B cell (primary cell): ENCODE measurements at regions of chr2 and their contacts with region 1.

Region 1: DNA sequence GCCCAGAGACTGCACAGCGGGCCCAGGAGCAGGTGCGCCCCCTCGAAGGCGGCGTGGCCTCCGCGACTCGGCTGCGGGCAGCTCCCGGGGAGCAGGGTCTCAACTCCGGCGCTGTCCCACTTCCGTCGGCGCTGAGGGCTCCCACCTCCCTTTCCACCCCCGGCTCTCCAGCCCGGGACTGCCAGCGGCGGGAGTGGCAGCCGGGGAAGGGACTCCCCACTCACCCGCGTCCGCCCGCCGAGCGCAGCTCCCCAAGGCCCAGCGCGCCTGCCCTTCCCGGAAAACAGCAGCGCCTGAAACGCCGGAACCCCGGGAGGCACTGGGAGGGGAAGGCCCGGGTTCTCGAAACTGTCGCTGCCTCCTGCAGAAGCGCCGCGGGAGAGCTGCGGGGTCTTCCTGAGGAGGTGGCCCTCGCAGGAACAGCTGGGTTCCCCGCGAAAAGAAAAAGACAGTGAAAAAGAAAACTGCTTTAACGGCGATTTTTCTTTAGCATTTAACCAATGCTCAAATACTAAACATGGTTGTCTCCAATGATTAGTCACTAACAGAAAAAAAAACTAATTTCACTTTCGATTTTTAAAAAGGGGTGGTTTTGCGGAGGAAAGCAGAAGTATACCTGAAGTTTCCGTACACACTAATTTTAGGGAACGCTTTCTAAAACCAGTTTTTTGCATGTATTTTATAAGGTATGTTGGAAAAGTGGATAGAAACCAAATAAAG is at the start of gene NMI:
- DNase-seq: peak; percentile 85
- ATAC-seq: peak; percentile 76
- H3K4me3 ChIP-seq: peak within 1 kb of the TSS; percentile 75 to 97 (median 92)
- H3K4me3 Mint-ChIP-seq: peak within 1 kb of the TSS; percentile 94
- H3K27ac ChIP-seq: peak within 1 kb of the TSS; percentile 95 to 97
- H3K27ac Mint-ChIP-seq: peak within 1 kb of the TSS; percentile 97
- H3K4me1 ChIP-seq: peaks cover 27 to 31% of the 10 kb centered on the region in 2 donors
- H3K4me1 Mint-ChIP-seq: peaks cover 39% of the 10 kb centered on the region
- H3K27me3 ChIP-seq: no peaks in the 10 kb centered on the region
- H3K27me3 Mint-ChIP-seq: no peaks in the 10 kb centered on the region
- CTCF ChIP-seq: no peak
- total RNA-seq, gene NMI: 28.5 and 34.0 TPM in 2 replicates

Region 2: GRCh38 chr2:151189125-151189524 is 100.4 kb before region 1 on chr2:
- CTCF ChIA-PET with region 1: no interaction called
- POLR2A ChIA-PET with region 1: no interaction called
- intact Hi-C with region 1: no loop called
- DNase-seq: no peak
- ATAC-seq: no peak
- H3K4me3 ChIP-seq: no peak overlapping the region
- H3K4me3 Mint-ChIP-seq: no peak overlapping the region
- H3K27ac ChIP-seq: no peak overlapping the region
- H3K27ac Mint-ChIP-seq: no peak overlapping the region
- H3K4me1 ChIP-seq: no peaks in the 10 kb centered on the region
- H3K4me1 Mint-ChIP-seq: no peaks in the 10 kb centered on the region
- H3K27me3 ChIP-seq: no peaks in the 10 kb centered on the region
- H3K27me3 Mint-ChIP-seq: no peaks in the 10 kb centered on the region
- CTCF ChIP-seq: no peak

Region 3: DNA sequence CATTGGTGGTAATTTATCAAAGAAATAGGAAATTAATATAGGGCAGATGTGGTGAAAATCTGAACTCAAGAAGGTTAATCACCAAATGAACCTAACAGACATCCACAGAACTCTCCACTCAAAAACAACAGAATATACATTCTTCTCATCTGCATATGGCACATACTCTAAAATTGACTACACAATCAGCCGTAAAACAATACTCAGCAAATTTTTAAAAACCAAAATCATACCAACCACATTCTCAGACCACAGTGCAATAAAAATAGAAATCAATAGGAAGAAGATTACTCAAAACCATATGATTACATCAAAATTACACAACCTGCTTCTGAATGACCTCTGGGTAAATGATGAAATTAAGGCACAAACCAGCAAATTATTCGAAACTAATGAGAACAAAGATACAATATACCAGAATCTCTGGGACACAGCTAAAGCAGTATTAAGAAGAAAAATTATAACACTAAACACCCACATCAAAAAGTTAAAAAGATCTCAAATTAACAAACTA is 58.8 kb before region 1 on chr2:
- CTCF ChIA-PET with region 1: no interaction called
- POLR2A ChIA-PET with region 1: no interaction called
- intact Hi-C with region 1: no loop called
- DNase-seq: no peak
- ATAC-seq: no peak
- H3K4me3 ChIP-seq: no peak overlapping the region
- H3K4me3 Mint-ChIP-seq: no peak overlapping the region
- H3K27ac ChIP-seq: no peak overlapping the region
- H3K27ac Mint-ChIP-seq: no peak overlapping the region
- H3K4me1 ChIP-seq: no peaks in the 10 kb centered on the region
- H3K4me1 Mint-ChIP-seq: no peaks in the 10 kb centered on the region
- H3K27me3 ChIP-seq: peaks cover 0 to 5% (median 3%) of the 10 kb centered on the region in 4 experiments
- H3K27me3 Mint-ChIP-seq: peaks cover 27% of the 10 kb centered on the region
- CTCF ChIP-seq: no peak

Region 4: GRCh38 chr2:151261231-151261976 is 28.1 kb before region 1 on chr2 and contains the start of gene RBM43:
- CTCF ChIA-PET with region 1: interaction called, 11 read pairs
- POLR2A ChIA-PET with region 1: interaction called, 17 read pairs
- intact Hi-C with region 1: loop called (anchors 1 kb)
- DNase-seq: peak; percentile 86
- ATAC-seq: peak; percentile 84
- H3K4me3 ChIP-seq: peak within 1 kb of the TSS; percentile 78 to 96 (median 85)
- H3K4me3 Mint-ChIP-seq: peak within 1 kb of the TSS; percentile 94
- H3K27ac ChIP-seq: peak within 1 kb of the TSS; percentile 88 to 91
- H3K27ac Mint-ChIP-seq: peak within 1 kb of the TSS; percentile 87
- H3K4me1 ChIP-seq: peaks cover 11 to 12% of the 10 kb centered on the region in 2 donors
- H3K4me1 Mint-ChIP-seq: peaks cover 23% of the 10 kb centered on the region
- H3K27me3 ChIP-seq: no peaks in the 10 kb centered on the region
- H3K27me3 Mint-ChIP-seq: no peaks in the 10 kb centered on the region
- CTCF ChIP-seq: no peak
- total RNA-seq, gene RBM43: 8.4 and 9.0 TPM in 2 replicates